PC-3 (cell line): ENCODE measurements at regions of chr4 and their contacts with region 1.

Region 1: GRCh38 chr4:107689912-107690565 is 30.0 kb downstream of the PAPSS1 start:
- DNase-seq: peak; percentile 90
- ATAC-seq: peak; percentile 99
- H3K4me3 ChIP-seq: peak overlapping the region; percentile 11; the same call in 1 of the 2 replicates
- H3K27ac ChIP-seq: peak overlapping the region; percentile 76
- H3K4me1 ChIP-seq: peaks cover 23% of the 10 kb centered on the region
- H3K27me3 ChIP-seq: no peaks in the 10 kb centered on the region
- CTCF ChIP-seq: no peak

Region 2: DNA sequence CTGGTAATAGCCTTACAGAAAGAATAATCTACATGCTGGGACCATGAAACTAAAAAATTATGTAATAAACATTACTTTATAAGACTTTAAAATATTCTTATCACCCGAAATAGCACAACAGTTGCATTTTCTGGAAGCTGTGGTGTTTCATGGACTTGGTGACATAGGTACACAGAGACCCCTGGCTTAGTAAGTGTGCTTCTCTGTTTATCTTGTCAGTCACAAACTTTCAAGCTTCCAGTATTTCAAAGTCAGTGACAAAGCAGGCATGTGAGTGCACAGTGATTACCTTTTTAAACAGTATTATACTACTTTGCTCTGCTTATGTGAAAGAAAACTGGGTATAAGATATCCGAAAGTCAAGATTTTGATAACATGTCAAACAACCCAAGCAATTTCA is 54.3 kb before region 1 on chr4:
- CTCF ChIA-PET with region 1: no interaction called
- POLR2A ChIA-PET with region 1: no interaction called
- intact Hi-C with region 1: loop called (anchors 2 kb)
- DNase-seq: no peak
- ATAC-seq: no peak
- H3K4me3 ChIP-seq: no peak overlapping the region
- H3K27ac ChIP-seq: no peak overlapping the region
- H3K4me1 ChIP-seq: no peaks in the 10 kb centered on the region
- H3K27me3 ChIP-seq: no peaks in the 10 kb centered on the region
- CTCF ChIP-seq: no peak

Region 3: GRCh38 chr4:107709916-107710315 is 19.9 kb after region 1 on chr4:
- CTCF ChIA-PET with region 1: no interaction called
- POLR2A ChIA-PET with region 1: no interaction called
- intact Hi-C with region 1: loop called (anchors 2 kb)
- DNase-seq: peak; percentile 47
- ATAC-seq: peak; percentile 42
- H3K4me3 ChIP-seq: no peak overlapping the region
- H3K27ac ChIP-seq: peak overlapping the region; percentile 95
- H3K4me1 ChIP-seq: peaks cover 46% of the 10 kb centered on the region
- H3K27me3 ChIP-seq: no peaks in the 10 kb centered on the region
- CTCF ChIP-seq: no peak